GM12878 (cell line): ENCODE measurements at regions of chr12 and their contacts with region 1.

Region 1: GRCh38 chr12:48788854-48789796 is at the start of gene ADCY6:
- DNase-seq: no peak
- ATAC-seq: peak; percentile 78
- H3K4me3 ChIP-seq: peak within 1 kb of the TSS; percentile 11; the same call in 1 of the 2 replicates
- H3K27ac ChIP-seq: no peak within 1 kb of the TSS
- H3K4me1 ChIP-seq: no peaks in the 10 kb centered on the region
- H3K27me3 ChIP-seq: no peaks in the 10 kb centered on the region
- CTCF ChIP-seq: no peak
- EP300 ChIP-seq: no peak
- POLR2A ChIP-seq: no peak
- RAD21 ChIP-seq: no peak
- polyA plus RNA-seq, gene ADCY6: 0.07 to 0.14 TPM

Region 2: GRCh38 chr12:48728807-48729206 is 60.3 kb before region 1 on chr12:
- CTCF ChIA-PET with region 1: no interaction called
- POLR2A ChIA-PET with region 1: no interaction called
- RAD21 ChIA-PET with region 1: no interaction called
- SMC1A ChIA-PET with region 1: no interaction called
- in situ Hi-C with region 1: no loop called
- intact Hi-C with region 1: no loop called
- DNase-seq: no peak
- ATAC-seq: no peak
- H3K4me3 ChIP-seq: no peak overlapping the region
- H3K27ac ChIP-seq: no peak overlapping the region
- H3K4me1 ChIP-seq: no peaks in the 10 kb centered on the region
- H3K27me3 ChIP-seq: no peaks in the 10 kb centered on the region
- CTCF ChIP-seq: no peak
- EP300 ChIP-seq: no peak
- POLR2A ChIP-seq: no peak
- RAD21 ChIP-seq: no peak

Region 3: GRCh38 chr12:48758221-48758620 is 30.9 kb before region 1 on chr12:
- CTCF ChIA-PET with region 1: interaction called, 405 read pairs
- POLR2A ChIA-PET with region 1: interaction called, 9 read pairs
- RAD21 ChIA-PET with region 1: interaction called, 158 read pairs
- SMC1A ChIA-PET with region 1: interaction called, 182 read pairs
- in situ Hi-C with region 1: no loop called
- intact Hi-C with region 1: no loop called
- DNase-seq: no peak
- ATAC-seq: no peak
- H3K4me3 ChIP-seq: no peak overlapping the region
- H3K27ac ChIP-seq: no peak overlapping the region
- H3K4me1 ChIP-seq: no peaks in the 10 kb centered on the region
- H3K27me3 ChIP-seq: no peaks in the 10 kb centered on the region
- CTCF ChIP-seq: no peak
- EP300 ChIP-seq: no peak
- POLR2A ChIP-seq: no peak
- RAD21 ChIP-seq: no peak

Region 4: DNA sequence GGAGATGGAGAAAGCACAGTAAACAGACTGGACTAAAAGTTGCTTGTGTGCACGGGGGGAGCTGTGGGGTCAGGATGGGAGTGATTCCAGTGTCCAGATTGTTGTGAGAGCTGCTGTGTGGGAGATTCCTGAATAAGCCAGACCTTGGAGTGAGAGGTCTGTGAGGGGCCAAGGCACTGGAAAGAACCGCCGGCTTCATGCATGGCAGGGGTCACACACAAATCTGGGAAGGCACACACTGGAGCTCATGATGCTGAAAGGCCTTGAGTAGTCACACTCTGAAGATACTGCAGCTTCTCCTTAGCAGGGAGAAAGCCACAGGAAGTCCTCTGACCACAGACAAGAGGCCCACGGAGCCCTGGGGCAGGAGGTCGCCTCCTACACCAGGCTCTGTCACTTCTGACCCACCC is 23.4 kb before region 1 on chr12:
- CTCF ChIA-PET with region 1: interaction called, 405 read pairs
- POLR2A ChIA-PET with region 1: interaction called, 3 read pairs
- RAD21 ChIA-PET with region 1: interaction called, 5 read pairs
- SMC1A ChIA-PET with region 1: interaction called, 4 read pairs
- in situ Hi-C with region 1: no loop called
- intact Hi-C with region 1: loop called (anchors 1 kb)
- DNase-seq: no peak
- ATAC-seq: peak; percentile 86
- H3K4me3 ChIP-seq: no peak overlapping the region
- H3K27ac ChIP-seq: no peak overlapping the region
- H3K4me1 ChIP-seq: peaks cover 18% of the 10 kb centered on the region
- H3K27me3 ChIP-seq: no peaks in the 10 kb centered on the region
- CTCF ChIP-seq: no peak
- EP300 ChIP-seq: no peak
- POLR2A ChIP-seq: no peak
- RAD21 ChIP-seq: no peak